Prostate gland (tissue), 2 donors: ENCODE measurements at regions of chr4 and their contacts with region 1.

Region 1: DNA sequence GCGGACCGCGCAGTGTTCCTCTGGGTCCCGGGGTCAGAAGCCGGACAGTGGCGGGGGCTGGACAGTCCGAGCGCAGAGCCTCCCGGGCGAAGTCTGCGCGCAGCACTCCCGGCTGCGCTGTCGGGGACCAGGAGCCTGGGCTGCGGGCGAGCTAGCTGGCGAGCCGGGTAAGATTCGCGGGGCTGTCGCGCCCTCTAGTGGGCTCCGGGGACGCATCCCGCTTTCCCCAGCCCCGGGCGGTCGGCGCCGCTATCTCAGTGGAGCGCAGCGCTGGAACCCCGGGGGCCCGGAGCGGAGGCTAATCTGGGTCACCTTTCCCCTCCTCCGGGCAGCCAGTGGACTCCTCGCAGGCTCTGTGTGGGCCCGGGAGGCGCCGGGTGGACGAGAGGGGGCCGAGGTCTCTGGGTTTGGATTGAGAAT is 4.2 kb downstream of the PDGFRA start:
- DNase-seq: peak; percentile 74
- H3K4me3 ChIP-seq: peak overlapping the region; percentile 29 to 30
- H3K27ac ChIP-seq: peak overlapping the region; percentile 36 to 56
- H3K4me1 ChIP-seq: peaks cover 3% of the 10 kb centered on the region
- H3K27me3 ChIP-seq: peaks cover 11% of the 10 kb centered on the region
- CTCF ChIP-seq: peak; percentile 49 to 83 (median 81)
- POLR2A ChIP-seq: no peak

Region 2: GRCh38 chr4:52545099-52546069 is 1687.9 kb before region 1 on chr4:
- intact Hi-C with region 1: loop called (anchors 10 kb)
- DNase-seq: peak; percentile 60
- H3K4me3 ChIP-seq: no peak overlapping the region
- H3K27ac ChIP-seq: no peak overlapping the region
- H3K4me1 ChIP-seq: no peaks in the 10 kb centered on the region
- H3K27me3 ChIP-seq: no peaks in the 10 kb centered on the region
- CTCF ChIP-seq: peak; percentile 76 to 88 (median 86)
- POLR2A ChIP-seq: no peak

Region 3: DNA sequence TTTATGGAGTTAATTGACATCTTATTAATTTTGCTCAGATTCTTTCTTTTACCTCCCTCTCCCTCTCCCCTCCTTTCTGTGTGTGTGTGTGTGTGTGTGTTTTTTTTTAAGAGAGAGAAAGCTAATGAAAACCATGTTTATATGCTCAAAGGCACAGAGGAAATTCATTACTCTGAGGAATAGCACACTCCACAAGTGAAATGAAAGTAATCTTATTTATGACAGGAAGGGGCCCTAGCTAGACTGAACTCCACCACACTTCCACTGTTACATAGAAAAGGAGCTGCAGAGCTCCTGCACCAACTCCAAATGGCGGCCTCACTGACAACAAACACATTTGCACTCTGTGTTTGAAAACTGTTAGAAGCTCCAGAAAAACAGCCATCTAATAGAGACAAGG is 1220.5 kb before region 1 on chr4:
- intact Hi-C with region 1: loop called (anchors 5 kb)
- DNase-seq: no peak
- H3K4me3 ChIP-seq: no peak overlapping the region
- H3K27ac ChIP-seq: no peak overlapping the region
- H3K4me1 ChIP-seq: peaks cover 4% of the 10 kb centered on the region
- H3K27me3 ChIP-seq: no peaks in the 10 kb centered on the region
- CTCF ChIP-seq: no peak
- POLR2A ChIP-seq: no peak

Region 4: GRCh38 chr4:53908661-53909078 is 324.6 kb before region 1 on chr4:
- intact Hi-C with region 1: loop called (anchors 5 kb)
- DNase-seq: peak; percentile 46
- H3K4me3 ChIP-seq: no peak overlapping the region
- H3K27ac ChIP-seq: no peak overlapping the region
- H3K4me1 ChIP-seq: no peaks in the 10 kb centered on the region
- H3K27me3 ChIP-seq: no peaks in the 10 kb centered on the region
- CTCF ChIP-seq: peak in 3 of 4 experiments; percentile 50 to 73 (median 66)
- POLR2A ChIP-seq: no peak